BJ (cell line): ENCODE measurements at regions of chr16 and their contacts with region 1.

Region 1: DNA sequence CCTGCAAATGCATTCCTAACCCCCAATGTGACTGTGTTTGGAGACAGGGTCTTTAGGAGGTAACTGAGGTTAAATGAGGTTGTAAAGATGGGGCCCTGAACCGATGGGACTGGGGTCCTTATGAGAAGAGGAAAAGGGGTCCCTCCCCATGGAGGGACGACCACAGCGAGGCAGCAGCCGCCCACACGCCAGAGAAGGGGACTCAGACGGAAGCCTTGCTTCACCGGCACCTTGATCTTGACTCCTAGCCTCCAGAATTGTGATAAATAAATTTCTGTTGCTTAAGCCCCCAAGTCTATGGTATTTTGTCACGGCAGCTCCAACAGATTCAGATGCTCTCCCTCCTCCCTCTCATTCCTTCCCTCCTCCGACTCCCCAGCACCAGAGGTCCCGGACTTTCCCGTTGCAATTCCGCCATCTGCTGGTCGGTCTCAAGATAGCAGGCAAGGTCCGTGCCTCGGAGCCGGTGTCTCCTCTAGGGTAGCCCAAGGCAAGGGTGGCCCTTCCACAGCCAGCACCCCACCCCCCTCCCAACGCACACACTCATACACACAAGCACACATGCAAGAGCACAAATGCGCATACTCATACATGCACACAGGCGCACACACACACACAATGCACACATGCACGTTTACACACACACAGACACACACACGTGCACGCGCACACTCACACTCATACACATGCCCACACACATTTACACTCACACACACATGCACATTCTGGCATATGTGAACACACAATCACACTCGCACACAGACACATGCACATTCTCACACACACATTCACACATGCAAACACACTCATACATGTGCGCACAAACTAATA is 23.1 kb upstream of the C16orf78 start:
- DNase-seq: no peak
- H3K4me3 ChIP-seq: no peak overlapping the region
- H3K27me3 ChIP-seq: 0 out of 2 replicates have a peak, but pooled peaks cover 1% of the 10 kb centered on the region
- CTCF ChIP-seq: peak; percentile 86

Region 2: GRCh38 chr16:48687421-48688038 is 663.0 kb before region 1 on chr16:
- CTCF ChIA-PET with region 1: interaction called, 74 read pairs
- POLR2A ChIA-PET with region 1: no interaction called
- DNase-seq: peak; percentile 7
- H3K4me3 ChIP-seq: no peak overlapping the region
- H3K27me3 ChIP-seq: peaks cover 1% of the 10 kb centered on the region; the same call in 1 of the 2 replicates
- CTCF ChIP-seq: peak; percentile 76

Region 3: GRCh38 chr16:48862087-48862532 is 488.4 kb before region 1 on chr16:
- CTCF ChIA-PET with region 1: interaction called, 12 read pairs
- POLR2A ChIA-PET with region 1: no interaction called
- DNase-seq: peak; percentile 69
- H3K4me3 ChIP-seq: no peak overlapping the region
- H3K27me3 ChIP-seq: no peaks in the 10 kb centered on the region
- CTCF ChIP-seq: peak; percentile 50